ENCODE measurements at regions of chr5 and their contacts with region 1.

Region 1: GRCh38 chr5:58380655-58381054 is 79.2 kb downstream of the PLK2 start:
- H3K4me3 ChIP-seq: no peak overlapping the region
- H3K27ac ChIP-seq: no peak overlapping the region
- H3K4me1 ChIP-seq: no peaks in the 10 kb centered on the region
- CTCF ChIP-seq: no peak

Region 2: GRCh38 chr5:58392496-58392895 is 11.8 kb after region 1 on chr5:
- CTCF ChIA-PET with region 1: interaction called, 12 read pairs
- POLR2A ChIA-PET with region 1: no interaction called
- H3K4me3 ChIP-seq: no peak overlapping the region
- H3K27ac ChIP-seq: no peak overlapping the region
- H3K4me1 ChIP-seq: no peaks in the 10 kb centered on the region
- CTCF ChIP-seq: no peak

Region 3: DNA sequence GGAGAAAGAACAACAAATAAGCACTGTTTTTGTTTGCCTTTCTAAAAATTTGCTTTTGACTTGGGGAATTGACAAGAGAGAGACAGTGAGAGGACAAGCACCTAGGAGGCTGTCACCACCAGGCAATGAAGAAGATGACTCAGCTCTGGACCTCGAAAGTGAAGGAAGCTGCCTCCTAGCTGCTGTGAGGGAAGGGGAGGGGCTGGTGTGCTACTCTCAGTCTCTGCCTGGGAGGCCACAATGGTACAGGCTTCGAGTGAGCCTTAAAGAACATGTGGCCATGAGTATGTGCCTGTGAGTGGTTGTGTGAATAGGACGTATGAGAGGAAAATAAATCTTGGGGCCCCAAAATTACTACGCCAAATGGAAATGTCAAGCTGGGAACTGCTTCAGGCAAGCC is 86.3 kb after region 1 on chr5:
- CTCF ChIA-PET with region 1: no interaction called
- POLR2A ChIA-PET with region 1: no interaction called
- H3K4me3 ChIP-seq: no peak overlapping the region
- H3K27ac ChIP-seq: no peak overlapping the region
- H3K4me1 ChIP-seq: no peaks in the 10 kb centered on the region
- CTCF ChIP-seq: no peak

Region 4: GRCh38 chr5:58641533-58641932 is 260.9 kb after region 1 on chr5:
- CTCF ChIA-PET with region 1: no interaction called
- POLR2A ChIA-PET with region 1: no interaction called
- H3K4me3 ChIP-seq: no peak overlapping the region
- H3K27ac ChIP-seq: no peak overlapping the region
- H3K4me1 ChIP-seq: no peaks in the 10 kb centered on the region
- CTCF ChIP-seq: no peak